Activated CD4-positive, alpha-beta memory T cell treated with anti-CD3 and anti-CD28 coated beads, Interleukin-2, amount 10 ng/mL, durations not matched to agents 7 days and 5 days (primary cell): ENCODE measurements at regions of chr12 and their contacts with region 1.

Region 1: DNA sequence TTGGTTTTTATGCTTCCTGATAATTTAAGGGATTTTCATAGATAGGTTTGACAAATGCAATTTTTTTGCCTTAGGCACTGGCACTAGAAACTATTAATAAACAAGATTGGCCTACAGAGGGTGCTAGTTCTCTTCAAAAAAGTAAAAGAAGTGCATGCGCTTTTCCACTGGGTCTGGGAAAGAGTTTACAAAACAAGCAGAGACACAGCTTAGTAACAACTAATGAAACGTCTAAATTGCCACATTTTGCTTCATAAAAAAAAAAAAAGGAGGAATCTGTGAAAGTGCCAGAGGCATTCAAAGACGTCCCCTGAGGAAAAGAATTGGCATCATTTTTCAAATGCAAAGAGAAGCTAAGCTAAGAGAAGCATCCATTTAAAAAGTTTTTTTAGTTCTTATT is 58.3 kb upstream of the EEA1 start:
- DNase-seq: no peak
- H3K4me3 Mint-ChIP-seq: no peak overlapping the region
- H3K27ac Mint-ChIP-seq: no peak overlapping the region
- H3K4me1 Mint-ChIP-seq: peaks cover 22% of the 10 kb centered on the region
- H3K27me3 Mint-ChIP-seq: peaks cover 11% of the 10 kb centered on the region

Region 2: GRCh38 chr12:92928962-92929915 is 58.1 kb before region 1 on chr12 and contains the start of gene EEA1:
- CTCF ChIA-PET with region 1: interaction called, 11 read pairs
- POLR2A ChIA-PET with region 1: interaction called, 3 read pairs
- DNase-seq: peak; percentile 96
- H3K4me3 Mint-ChIP-seq: peak within 1 kb of the TSS; percentile 80
- H3K27ac Mint-ChIP-seq: peak within 1 kb of the TSS; percentile 78
- H3K4me1 Mint-ChIP-seq: peaks cover 28% of the 10 kb centered on the region
- H3K27me3 Mint-ChIP-seq: peaks cover 16% of the 10 kb centered on the region
- total RNA-seq, gene EEA1: 12.6 to 16.1 TPM

Region 3: GRCh38 chr12:93008044-93008778 is 20.8 kb after region 1 on chr12:
- CTCF ChIA-PET with region 1: interaction called, 16 read pairs
- POLR2A ChIA-PET with region 1: no interaction called
- DNase-seq: no peak
- H3K4me3 Mint-ChIP-seq: no peak overlapping the region
- H3K27ac Mint-ChIP-seq: no peak overlapping the region
- H3K4me1 Mint-ChIP-seq: peaks cover 9% of the 10 kb centered on the region
- H3K27me3 Mint-ChIP-seq: no peaks in the 10 kb centered on the region

Region 4: GRCh38 chr12:93378373-93379325 is 391.3 kb after region 1 on chr12:
- CTCF ChIA-PET with region 1: interaction called, 19 read pairs
- POLR2A ChIA-PET with region 1: interaction called, 7 read pairs
- DNase-seq: peak; percentile 68
- H3K4me3 Mint-ChIP-seq: peak overlapping the region; percentile 100
- H3K27ac Mint-ChIP-seq: peak overlapping the region; percentile 100
- H3K4me1 Mint-ChIP-seq: peaks cover 34% of the 10 kb centered on the region
- H3K27me3 Mint-ChIP-seq: peaks cover 2% of the 10 kb centered on the region

Region 5: GRCh38 chr12:93419388-93420034 is 432.1 kb after region 1 on chr12:
- CTCF ChIA-PET with region 1: interaction called, 41 read pairs
- POLR2A ChIA-PET with region 1: interaction called, 4 read pairs
- DNase-seq: no peak
- H3K4me3 Mint-ChIP-seq: no peak overlapping the region
- H3K27ac Mint-ChIP-seq: no peak overlapping the region
- H3K4me1 Mint-ChIP-seq: peaks cover 83% of the 10 kb centered on the region
- H3K27me3 Mint-ChIP-seq: no peaks in the 10 kb centered on the region